ENCODE measurements at regions of chr17 and their contacts with region 1.

Region 1: DNA sequence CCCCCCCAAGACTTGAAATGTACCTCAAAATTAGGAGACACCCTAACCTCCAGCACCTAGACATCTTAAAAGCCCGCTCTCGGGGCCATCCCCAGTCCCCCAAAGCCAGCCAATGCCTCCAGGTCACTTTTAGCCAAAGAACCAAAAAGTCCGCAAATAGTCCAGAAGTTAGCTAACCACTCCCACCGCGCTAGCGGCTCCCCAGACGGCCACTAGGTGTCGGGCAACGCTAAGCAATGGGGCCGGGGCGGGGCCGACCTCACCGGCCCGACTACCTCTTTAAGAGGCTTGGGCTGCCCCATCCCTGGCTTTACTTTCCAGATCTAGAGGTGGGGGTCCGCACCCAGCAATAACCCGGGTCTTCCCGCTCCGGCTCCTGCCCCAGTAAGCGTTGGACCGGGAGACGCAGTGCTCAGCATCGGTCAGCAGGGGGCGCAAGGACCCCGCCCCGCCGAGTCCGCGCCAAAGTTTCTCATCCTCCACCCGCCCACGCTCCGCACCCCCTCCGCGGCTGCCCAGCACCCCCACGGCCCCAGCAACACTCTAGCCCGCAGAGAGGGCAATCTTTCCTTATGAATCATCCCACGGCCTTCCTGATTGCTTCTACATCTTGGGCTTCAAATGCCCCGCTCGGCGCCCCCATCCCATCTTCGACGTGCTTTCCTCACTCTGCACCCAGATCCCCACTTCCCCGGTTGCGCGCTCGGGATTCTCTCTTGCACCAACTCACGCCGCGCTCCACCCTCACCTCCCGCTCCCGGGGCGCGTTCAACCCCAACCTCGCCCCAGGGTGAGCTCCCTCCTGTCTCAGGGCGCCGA is 765 bp downstream of the COL1A1 start:
- DNase-seq: peak; percentile 89 to 93 (median 91)
- ATAC-seq: peak; percentile 85
- H3K4me3 ChIP-seq: no peak overlapping the region
- H3K4me1 ChIP-seq: peaks cover 26% of the 10 kb centered on the region
- CTCF ChIP-seq: peak; percentile 98

Region 2: GRCh38 chr17:50269477-50270434 is 69.1 kb after region 1 on chr17:
- intact Hi-C with region 1: loop called in 1 of 2 experiments (anchors 5 kb)
- DNase-seq: peak in 2 of 3 donors; percentile 73 to 82
- ATAC-seq: peak; percentile 58
- H3K4me3 ChIP-seq: no peak overlapping the region
- H3K4me1 ChIP-seq: peaks cover 15% of the 10 kb centered on the region
- CTCF ChIP-seq: peak; percentile 64

Region 3: DNA sequence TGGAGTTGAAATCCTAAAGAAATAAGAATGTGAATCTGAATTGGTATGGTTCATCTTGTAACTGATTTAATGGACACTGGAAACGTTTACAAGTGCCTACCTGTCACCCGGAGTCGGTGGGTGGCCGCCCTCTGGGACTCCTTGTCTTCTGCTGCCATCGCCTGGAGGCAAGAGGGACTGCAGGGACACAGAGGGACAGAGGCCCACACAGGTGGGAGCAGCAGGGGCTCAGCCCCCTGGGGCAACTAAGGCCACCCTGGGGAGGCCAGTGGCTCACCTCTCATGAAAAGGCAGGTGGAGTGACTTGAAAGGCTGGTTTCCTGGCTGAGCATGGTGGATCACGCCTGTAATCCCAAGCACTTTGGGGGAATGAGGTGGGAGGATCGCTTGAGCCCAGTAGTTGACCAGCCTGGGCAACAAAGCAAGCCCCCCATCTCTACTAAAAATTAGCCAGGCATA is 96.8 kb after region 1 on chr17:
- intact Hi-C with region 1: loop called in 1 of 2 experiments (anchors 5 kb)
- DNase-seq: peak; percentile 79 to 84 (median 83)
- ATAC-seq: peak; percentile 94
- H3K4me3 ChIP-seq: no peak overlapping the region
- H3K4me1 ChIP-seq: no peaks in the 10 kb centered on the region
- CTCF ChIP-seq: peak; percentile 84

Region 4: DNA sequence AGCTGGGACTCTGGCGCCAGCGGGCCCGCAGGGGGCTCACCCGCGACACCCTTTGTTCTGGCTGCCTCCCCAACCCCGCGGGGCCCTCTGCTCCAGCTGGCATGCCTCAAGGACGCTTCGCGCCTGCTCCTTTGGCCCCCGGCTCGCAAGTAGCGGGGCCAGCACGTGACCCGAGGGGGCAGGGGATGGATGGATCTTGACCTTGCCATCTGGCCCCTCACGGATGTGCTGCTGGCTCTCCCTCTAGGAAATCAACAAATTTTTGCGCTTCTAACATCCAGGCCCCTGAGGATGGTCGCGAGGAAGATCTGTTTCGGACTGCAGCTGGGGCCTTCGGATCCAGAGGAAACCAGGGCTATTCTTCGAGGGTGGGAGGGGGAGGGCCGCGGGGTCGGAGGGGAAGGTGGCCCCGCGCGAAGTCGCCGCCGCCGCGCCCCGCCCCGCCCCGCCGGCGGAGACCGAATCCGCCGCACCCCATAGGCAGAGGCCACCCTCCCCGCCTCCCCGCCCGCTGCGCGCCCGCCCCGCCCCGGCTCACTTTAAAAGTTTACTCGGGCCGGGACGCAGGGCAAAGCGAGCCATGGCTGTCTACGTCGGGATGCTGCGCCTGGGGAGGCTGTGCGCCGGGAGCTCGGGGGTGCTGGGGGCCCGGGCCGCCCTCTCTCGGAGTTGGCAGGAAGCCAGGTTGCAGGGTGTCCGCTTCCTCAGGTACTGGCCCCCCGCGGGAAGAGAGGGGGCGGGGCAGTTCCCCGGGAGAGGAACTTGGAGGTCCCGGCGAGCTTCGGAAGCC is 225.2 kb after region 1 on chr17 and contains the start of gene ACSF2:
- intact Hi-C with region 1: no loop called
- DNase-seq: peak; percentile 90 to 92 (median 90)
- ATAC-seq: peak; percentile 91
- H3K4me3 ChIP-seq: peak within 1 kb of the TSS; percentile 74
- H3K4me1 ChIP-seq: peaks cover 40% of the 10 kb centered on the region
- CTCF ChIP-seq: no peak
- total RNA-seq, gene ACSF2: 79.7 to 246 (median 99.4) TPM

Measured in mucosa of descending colon (tissue), 3 donors.